ENCODE measurements at regions of chr3 and their contacts with region 1.

Region 1: GRCh38 chr3:53195602-53196574 is 34.9 kb downstream of the PRKCD start:
- DNase-seq: peak; percentile 62
- ATAC-seq: peak; percentile 83
- H3K4me3 Mint-ChIP-seq: no peak overlapping the region
- H3K27ac Mint-ChIP-seq: no peak overlapping the region
- H3K4me1 Mint-ChIP-seq: peaks cover 18% of the 10 kb centered on the region
- H3K27me3 Mint-ChIP-seq: no peaks in the 10 kb centered on the region

Region 2: GRCh38 chr3:53092942-53093341 is 102.9 kb before region 1 on chr3:
- CTCF ChIA-PET with region 1: no interaction called
- DNase-seq: no peak
- ATAC-seq: no peak
- H3K4me3 Mint-ChIP-seq: no peak overlapping the region
- H3K27ac Mint-ChIP-seq: peak overlapping the region; percentile 26
- H3K4me1 Mint-ChIP-seq: no peaks in the 10 kb centered on the region
- H3K27me3 Mint-ChIP-seq: no peaks in the 10 kb centered on the region

Region 3: DNA sequence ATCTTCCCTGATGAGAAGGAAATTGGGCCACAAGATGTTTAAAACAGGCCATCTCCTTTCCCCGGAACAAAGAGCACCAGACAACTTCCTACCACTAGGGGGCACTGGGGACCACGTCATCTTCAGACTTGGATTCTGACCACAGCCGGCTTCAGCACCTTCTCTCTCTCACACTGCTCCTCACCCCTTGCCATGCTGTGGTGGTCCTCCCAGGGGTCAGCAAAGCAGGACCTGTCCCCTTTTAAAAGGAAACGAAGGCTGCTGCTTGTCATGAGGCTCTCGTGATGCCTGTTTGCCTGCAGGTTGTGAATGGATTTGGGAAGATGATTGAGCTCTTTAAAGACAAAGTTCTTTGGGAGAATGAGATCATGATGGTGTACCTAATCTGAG is 81.9 kb before region 1 on chr3:
- CTCF ChIA-PET with region 1: interaction called, 67 read pairs
- DNase-seq: peak; percentile 91
- ATAC-seq: peak; percentile 81
- H3K4me3 Mint-ChIP-seq: no peak overlapping the region
- H3K27ac Mint-ChIP-seq: no peak overlapping the region
- H3K4me1 Mint-ChIP-seq: peaks cover 20% of the 10 kb centered on the region
- H3K27me3 Mint-ChIP-seq: no peaks in the 10 kb centered on the region

Region 4: GRCh38 chr3:53130179-53131061 is 65.5 kb before region 1 on chr3 and contains the start of gene RFT1:
- CTCF ChIA-PET with region 1: interaction called, 165 read pairs
- DNase-seq: peak; percentile 99
- ATAC-seq: peak; percentile 96
- H3K4me3 Mint-ChIP-seq: peak within 1 kb of the TSS; percentile 98
- H3K27ac Mint-ChIP-seq: peak within 1 kb of the TSS; percentile 92
- H3K4me1 Mint-ChIP-seq: peaks cover 28% of the 10 kb centered on the region
- H3K27me3 Mint-ChIP-seq: no peaks in the 10 kb centered on the region
- total RNA-seq, gene RFT1: 32.4 to 38.3 TPM

Region 5: DNA sequence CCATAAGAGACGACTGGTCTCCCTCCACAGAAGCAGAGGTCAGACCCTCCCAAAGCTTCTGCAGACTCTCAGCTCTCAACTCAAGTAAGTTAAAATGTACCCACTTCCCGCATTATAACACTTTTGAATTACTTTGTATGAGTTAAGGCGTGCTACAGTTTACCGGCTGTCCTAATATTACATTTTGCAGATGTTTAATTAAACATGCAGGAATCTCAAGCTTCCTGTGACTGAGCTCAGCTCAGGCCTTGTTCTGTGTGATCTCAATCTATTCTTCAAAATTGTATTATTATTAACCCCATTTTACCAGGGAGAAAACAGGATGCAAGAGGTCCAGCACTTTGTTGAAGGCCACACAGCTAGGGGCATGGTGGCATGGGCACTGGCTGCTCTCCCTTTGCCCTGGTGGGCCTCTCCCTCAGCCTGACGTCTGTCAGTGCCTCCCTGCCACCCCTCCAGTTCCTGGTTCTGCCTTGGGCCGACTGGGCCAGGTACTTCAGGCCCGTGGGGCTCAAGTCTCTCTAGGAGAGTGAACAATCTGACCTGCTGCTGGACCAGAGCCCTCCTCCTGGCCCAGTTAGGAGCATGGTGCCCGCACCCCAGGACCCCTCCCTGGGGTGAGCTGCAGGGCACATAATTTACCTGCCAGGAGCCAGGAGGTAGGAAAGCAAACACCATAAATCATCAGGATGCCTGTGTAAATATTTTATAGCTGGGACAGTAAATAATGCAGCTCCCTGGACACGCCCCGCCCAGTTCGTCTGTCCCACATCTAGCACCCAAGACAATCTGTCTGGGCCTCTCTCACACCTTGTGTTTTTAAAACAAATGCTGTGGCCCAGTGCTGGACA is 50.8 kb before region 1 on chr3:
- CTCF ChIA-PET with region 1: interaction called, 19 read pairs
- DNase-seq: no peak
- ATAC-seq: no peak
- H3K4me3 Mint-ChIP-seq: no peak overlapping the region
- H3K27ac Mint-ChIP-seq: no peak overlapping the region
- H3K4me1 Mint-ChIP-seq: no peaks in the 10 kb centered on the region
- H3K27me3 Mint-ChIP-seq: no peaks in the 10 kb centered on the region

Region 6: GRCh38 chr3:53166781-53167291 is 29.1 kb before region 1 on chr3:
- CTCF ChIA-PET with region 1: interaction called, 12 read pairs
- DNase-seq: no peak
- ATAC-seq: no peak
- H3K4me3 Mint-ChIP-seq: no peak overlapping the region
- H3K27ac Mint-ChIP-seq: no peak overlapping the region
- H3K4me1 Mint-ChIP-seq: peaks cover 51% of the 10 kb centered on the region
- H3K27me3 Mint-ChIP-seq: no peaks in the 10 kb centered on the region